Posterior cingulate gyrus (tissue), 11 donors: ENCODE measurements at regions of chr6 and their contacts with region 1.

Region 1: DNA sequence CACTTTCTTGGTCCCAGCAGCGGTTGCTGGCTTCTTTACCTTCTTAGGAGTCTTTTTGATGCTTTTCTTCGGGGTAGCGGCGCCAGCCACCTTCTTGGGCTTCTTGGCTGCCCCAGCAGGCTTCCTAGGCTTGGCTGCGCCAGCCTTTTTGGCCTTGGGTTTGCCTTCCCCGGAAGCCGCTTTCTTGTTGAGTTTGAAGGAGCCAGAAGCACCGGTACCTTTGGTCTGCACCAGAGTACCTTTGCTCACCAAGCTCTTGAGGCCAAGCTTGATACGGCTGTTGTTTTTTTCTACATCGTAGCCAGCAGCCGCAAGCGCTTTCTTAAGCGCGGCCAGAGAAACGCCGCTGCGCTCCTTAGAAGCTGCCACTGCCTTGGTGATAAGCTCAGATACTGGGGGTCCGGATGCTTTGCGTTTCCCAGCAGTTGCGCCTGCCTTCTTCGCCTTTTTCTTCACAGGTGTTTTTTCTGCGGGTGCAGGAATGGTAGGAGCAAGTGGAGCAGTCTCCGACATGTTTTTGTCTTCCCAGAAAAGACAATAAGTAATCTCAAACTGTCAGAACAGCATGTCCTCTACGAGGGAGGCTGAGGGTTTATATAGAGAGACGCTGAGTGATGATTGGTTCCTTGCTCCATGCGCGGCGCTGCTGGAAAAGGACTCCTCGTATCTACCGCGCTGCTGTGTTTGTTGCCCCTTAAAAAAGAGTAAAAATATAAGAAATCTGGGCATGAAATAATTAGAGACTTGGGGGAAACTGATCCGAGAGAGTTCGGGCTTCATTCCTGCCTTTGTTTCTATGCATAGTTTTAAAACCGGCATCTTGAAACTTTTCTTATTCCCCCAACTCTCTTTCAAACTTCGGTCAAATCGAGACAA is 130.3 kb upstream of the BTN3A2 start:
- DNase-seq: peak in 4 of 10 donors; percentile 41 to 83 (median 76)

Region 2: DNA sequence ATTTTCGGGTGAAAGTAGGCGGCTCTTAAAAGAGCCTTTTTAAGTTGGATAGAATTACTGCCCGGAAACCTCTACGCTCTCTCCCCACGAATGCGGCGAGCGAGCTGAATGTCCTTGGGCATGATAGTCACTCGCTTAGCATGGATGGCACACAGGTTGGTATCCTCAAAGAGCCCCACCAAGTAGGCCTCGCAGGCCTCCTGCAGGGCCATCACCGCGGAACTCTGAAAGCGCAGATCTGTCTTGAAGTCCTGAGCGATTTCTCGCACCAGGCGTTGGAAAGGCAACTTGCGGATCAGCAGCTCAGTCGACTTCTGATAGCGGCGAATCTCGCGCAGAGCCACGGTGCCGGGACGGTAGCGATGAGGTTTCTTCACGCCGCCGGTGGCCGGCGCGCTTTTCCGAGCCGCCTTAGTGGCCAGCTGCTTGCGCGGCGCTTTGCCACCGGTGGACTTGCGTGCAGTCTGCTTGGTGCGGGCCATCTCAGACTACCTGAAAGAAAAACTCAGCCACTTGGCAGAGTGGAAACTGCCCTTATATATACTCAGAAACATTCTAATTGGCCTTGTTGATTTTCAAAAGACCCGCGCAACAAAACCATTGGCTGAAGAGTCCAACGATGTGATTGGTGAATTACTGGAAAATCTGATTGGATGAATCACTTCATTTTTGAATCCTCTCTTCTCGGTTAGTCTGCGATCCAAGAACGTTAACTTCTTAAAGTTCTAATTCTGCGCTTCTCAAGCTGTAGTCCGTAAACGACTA is 36.4 kb after region 1 on chr6:
- intact Hi-C with region 1: loop called (anchors 5 kb)
- DNase-seq: peak in 2 of 10 donors; percentile 9 to 23